ENCODE measurements at regions of chr12 and their contacts with region 1.

Region 1: GRCh38 chr12:89051065-89051677 is 301.1 kb downstream of the DUSP6 start:
- DNase-seq: no peak
- H3K4me3 ChIP-seq: no peak overlapping the region
- H3K27ac ChIP-seq: no peak overlapping the region
- H3K4me1 ChIP-seq: no peaks in the 10 kb centered on the region
- H3K27me3 ChIP-seq: no peaks in the 10 kb centered on the region
- CTCF ChIP-seq: peak; percentile 88 to 94 (median 90)
- EP300 ChIP-seq: no peak
- POLR2A ChIP-seq: no peak

Region 2: GRCh38 chr12:89352492-89353187 is 301.5 kb after region 1 on chr12 and contains the start of gene DUSP6:
- in situ Hi-C with region 1: no loop called
- intact Hi-C with region 1: loop called (anchors 5 kb)
- DNase-seq: peak; percentile 97
- H3K4me3 ChIP-seq: peak within 1 kb of the TSS; percentile 61 to 71 (median 67)
- H3K27ac ChIP-seq: peak within 1 kb of the TSS; percentile 96 to 98 (median 98)
- H3K4me1 ChIP-seq: peaks cover 8 to 60% (median 21%) of the 10 kb centered on the region in 4 donors
- H3K27me3 ChIP-seq: no peaks in the 10 kb centered on the region
- CTCF ChIP-seq: no peak
- EP300 ChIP-seq: peak; percentile 6
- POLR2A ChIP-seq: peak; percentile 86
- total RNA-seq, gene DUSP6: 22.9 to 83.4 (median 53.2) TPM

Measured in transverse colon (tissue), 4 donors.